ENCODE measurements at regions of chr10 and their contacts with region 1.

Region 1: GRCh38 chr10:114577133-114577532 is 80.9 kb downstream of the ABLIM1 start:
- DNase-seq: peak; percentile 90
- H3K4me3 Mint-ChIP-seq: no peak overlapping the region
- H3K27ac Mint-ChIP-seq: peak overlapping the region; percentile 92
- H3K4me1 Mint-ChIP-seq: peaks cover 37% of the 10 kb centered on the region
- H3K27me3 Mint-ChIP-seq: no peaks in the 10 kb centered on the region
- CTCF ChIP-seq: no peak

Region 2: GRCh38 chr10:114603948-114604347 is 26.8 kb after region 1 on chr10:
- CTCF ChIA-PET with region 1: interaction called, 3 read pairs
- POLR2A ChIA-PET with region 1: interaction called, 12 read pairs
- intact Hi-C with region 1: no loop called
- DNase-seq: no peak
- H3K4me3 Mint-ChIP-seq: no peak overlapping the region
- H3K27ac Mint-ChIP-seq: no peak overlapping the region
- H3K4me1 Mint-ChIP-seq: peaks cover 27% of the 10 kb centered on the region
- H3K27me3 Mint-ChIP-seq: no peaks in the 10 kb centered on the region
- CTCF ChIP-seq: no peak

Region 3: GRCh38 chr10:114631666-114632417 is 54.7 kb after region 1 on chr10:
- CTCF ChIA-PET with region 1: no interaction called
- POLR2A ChIA-PET with region 1: interaction called, 29 read pairs
- intact Hi-C with region 1: no loop called
- DNase-seq: no peak
- H3K4me3 Mint-ChIP-seq: peak overlapping the region; percentile 73
- H3K27ac Mint-ChIP-seq: no peak overlapping the region
- H3K4me1 Mint-ChIP-seq: peaks cover 64% of the 10 kb centered on the region
- H3K27me3 Mint-ChIP-seq: no peaks in the 10 kb centered on the region
- CTCF ChIP-seq: no peak

Region 4: DNA sequence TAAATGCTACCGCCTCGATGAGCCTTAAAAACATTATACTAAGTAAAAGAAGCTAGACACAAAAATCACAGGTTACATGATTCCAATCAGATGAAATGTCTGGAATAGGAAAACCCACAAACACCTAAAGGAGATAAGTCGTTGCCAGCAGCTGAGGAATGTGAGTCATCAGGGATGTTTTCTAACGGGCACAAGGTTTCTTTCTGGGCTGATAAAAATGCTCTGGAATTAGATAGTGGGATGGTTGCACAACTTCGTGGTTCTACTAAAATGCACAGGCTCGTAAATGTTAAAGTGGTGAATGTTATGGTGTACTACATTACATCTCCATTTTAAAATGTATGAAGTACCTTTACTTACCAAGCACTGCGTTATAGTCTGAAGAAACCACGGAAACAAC is 71.2 kb after region 1 on chr10:
- CTCF ChIA-PET with region 1: no interaction called
- POLR2A ChIA-PET with region 1: interaction called, 12 read pairs
- intact Hi-C with region 1: no loop called
- DNase-seq: peak; percentile 69
- H3K4me3 Mint-ChIP-seq: peak overlapping the region; percentile 6
- H3K27ac Mint-ChIP-seq: peak overlapping the region; percentile 21
- H3K4me1 Mint-ChIP-seq: peaks cover 25% of the 10 kb centered on the region
- H3K27me3 Mint-ChIP-seq: no peaks in the 10 kb centered on the region
- CTCF ChIP-seq: no peak

Region 5: DNA sequence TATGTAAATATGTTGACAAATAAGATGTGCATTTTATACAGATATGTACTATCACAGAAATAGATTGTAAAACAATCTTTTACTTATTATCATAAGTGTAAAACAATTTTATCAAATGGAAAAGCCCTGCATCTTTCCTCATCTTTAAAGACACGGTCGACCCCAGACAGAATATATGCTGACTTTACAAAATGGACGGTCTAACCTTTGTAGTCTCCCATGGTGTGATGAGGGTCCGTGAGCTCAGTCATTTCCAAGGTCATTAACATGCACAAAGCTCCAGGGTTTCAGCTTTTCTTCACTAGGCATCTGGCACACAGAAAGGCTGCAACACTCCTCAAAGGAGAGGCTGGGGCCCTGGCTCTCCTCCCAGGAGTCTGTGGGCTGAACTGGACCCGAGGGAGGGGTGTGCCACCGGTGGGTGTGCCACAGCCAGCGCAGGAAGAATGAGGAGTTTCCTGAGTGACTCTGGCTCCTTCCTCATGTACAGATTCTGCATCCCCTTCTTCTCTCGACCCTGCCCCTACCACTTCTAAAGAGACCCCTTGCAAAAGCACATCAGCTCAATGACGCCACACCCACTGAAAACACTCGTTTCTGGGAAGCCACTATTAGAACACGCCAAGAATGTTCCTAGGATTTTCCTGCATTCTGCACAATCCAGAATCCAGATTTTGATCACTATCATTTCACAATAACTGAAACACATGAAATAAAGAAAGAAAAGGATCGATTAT is 107.1 kb after region 1 on chr10:
- CTCF ChIA-PET with region 1: no interaction called
- POLR2A ChIA-PET with region 1: interaction called, 18 read pairs
- intact Hi-C with region 1: loop called (anchors 5 kb)
- DNase-seq: peak; percentile 74
- H3K4me3 Mint-ChIP-seq: peak overlapping the region; percentile 67
- H3K27ac Mint-ChIP-seq: peak overlapping the region; percentile 74
- H3K4me1 Mint-ChIP-seq: peaks cover 33% of the 10 kb centered on the region
- H3K27me3 Mint-ChIP-seq: no peaks in the 10 kb centered on the region
- CTCF ChIP-seq: no peak

Region 6: DNA sequence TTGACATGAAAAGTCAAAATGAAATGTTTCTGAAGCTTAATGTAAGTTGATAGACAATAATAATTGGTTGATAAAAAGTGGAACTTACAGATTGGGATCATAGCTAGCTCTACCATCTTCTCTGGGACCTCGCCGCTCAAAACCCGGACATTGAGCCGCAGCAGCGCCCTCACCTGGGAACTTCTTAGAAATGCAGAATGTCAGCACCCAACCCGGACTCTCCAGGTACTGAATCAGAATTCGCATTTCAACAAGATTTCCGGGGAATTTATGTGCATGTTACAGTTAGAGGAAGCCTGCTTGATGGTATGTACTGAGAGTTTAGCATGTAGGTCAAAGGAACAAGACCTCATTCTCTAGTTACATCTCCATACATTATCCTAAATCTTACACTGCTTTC is 117.6 kb after region 1 on chr10:
- CTCF ChIA-PET with region 1: interaction called, 3 read pairs
- POLR2A ChIA-PET with region 1: interaction called, 17 read pairs
- intact Hi-C with region 1: no loop called
- DNase-seq: peak; percentile 60
- H3K4me3 Mint-ChIP-seq: no peak overlapping the region
- H3K27ac Mint-ChIP-seq: no peak overlapping the region
- H3K4me1 Mint-ChIP-seq: peaks cover 42% of the 10 kb centered on the region
- H3K27me3 Mint-ChIP-seq: no peaks in the 10 kb centered on the region
- CTCF ChIP-seq: peak; percentile 38

Region 7: GRCh38 chr10:114708717-114709335 is 131.7 kb after region 1 on chr10:
- CTCF ChIA-PET with region 1: interaction called, 7 read pairs
- POLR2A ChIA-PET with region 1: interaction called, 12 read pairs
- intact Hi-C with region 1: no loop called
- DNase-seq: peak; percentile 87
- H3K4me3 Mint-ChIP-seq: no peak overlapping the region
- H3K27ac Mint-ChIP-seq: peak overlapping the region; percentile 30
- H3K4me1 Mint-ChIP-seq: peaks cover 47% of the 10 kb centered on the region
- H3K27me3 Mint-ChIP-seq: no peaks in the 10 kb centered on the region
- CTCF ChIP-seq: no peak

Measured in MCF 10A (cell line).